ENCODE measurements at regions of chr5 and their contacts with region 1.

Region 1: GRCh38 chr5:97534166-97534565 is 351.1 kb upstream of the RIOK2 start:
- DNase-seq: peak; percentile 83
- H3K27ac ChIP-seq: no peak overlapping the region
- CTCF ChIP-seq: peak; percentile 81

Region 2: GRCh38 chr5:97231025-97231636 is 303.0 kb before region 1 on chr5:
- CTCF ChIA-PET with region 1: interaction called, 18 read pairs
- POLR2A ChIA-PET with region 1: no interaction called
- DNase-seq: peak; percentile 77
- H3K27ac ChIP-seq: no peak overlapping the region
- CTCF ChIP-seq: peak; percentile 93

Region 3: DNA sequence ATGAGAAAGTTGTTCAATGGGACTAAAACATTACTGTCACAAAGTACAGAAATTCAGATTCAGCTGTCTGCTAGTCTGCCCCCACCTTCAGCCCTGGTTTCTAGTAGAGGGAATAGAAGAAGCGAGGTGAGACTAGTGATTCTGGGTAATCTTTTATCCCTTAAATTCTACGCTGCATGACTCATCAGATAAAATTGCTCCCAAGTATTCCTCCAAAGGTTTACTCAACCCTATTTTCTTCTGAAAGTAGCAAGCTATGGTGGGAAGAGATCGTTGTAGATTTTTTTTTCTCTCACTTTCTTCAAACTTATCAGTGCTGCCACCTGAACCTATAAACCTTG is 32.2 kb before region 1 on chr5:
- CTCF ChIA-PET with region 1: interaction called, 10 read pairs
- POLR2A ChIA-PET with region 1: no interaction called
- DNase-seq: peak; percentile 30
- H3K27ac ChIP-seq: no peak overlapping the region
- CTCF ChIP-seq: no peak

Measured in RWPE1 (cell line).